Activated CD8-positive, alpha-beta T cell treated with anti-CD3 and anti-CD28 coated beads for 36 hours (primary cell): ENCODE measurements at regions of chr21 and their contacts with region 1.

Region 1: GRCh38 chr21:43884012-43884860 is 19.2 kb downstream of the AGPAT3 start:
- DNase-seq: peak; percentile 61
- ATAC-seq: peak; percentile 79
- H3K4me3 Mint-ChIP-seq: no peak overlapping the region
- H3K27ac Mint-ChIP-seq: peak overlapping the region; percentile 57
- H3K4me1 Mint-ChIP-seq: peaks cover 63% of the 10 kb centered on the region
- H3K27me3 Mint-ChIP-seq: no peaks in the 10 kb centered on the region
- CTCF ChIP-seq: no peak

Region 2: DNA sequence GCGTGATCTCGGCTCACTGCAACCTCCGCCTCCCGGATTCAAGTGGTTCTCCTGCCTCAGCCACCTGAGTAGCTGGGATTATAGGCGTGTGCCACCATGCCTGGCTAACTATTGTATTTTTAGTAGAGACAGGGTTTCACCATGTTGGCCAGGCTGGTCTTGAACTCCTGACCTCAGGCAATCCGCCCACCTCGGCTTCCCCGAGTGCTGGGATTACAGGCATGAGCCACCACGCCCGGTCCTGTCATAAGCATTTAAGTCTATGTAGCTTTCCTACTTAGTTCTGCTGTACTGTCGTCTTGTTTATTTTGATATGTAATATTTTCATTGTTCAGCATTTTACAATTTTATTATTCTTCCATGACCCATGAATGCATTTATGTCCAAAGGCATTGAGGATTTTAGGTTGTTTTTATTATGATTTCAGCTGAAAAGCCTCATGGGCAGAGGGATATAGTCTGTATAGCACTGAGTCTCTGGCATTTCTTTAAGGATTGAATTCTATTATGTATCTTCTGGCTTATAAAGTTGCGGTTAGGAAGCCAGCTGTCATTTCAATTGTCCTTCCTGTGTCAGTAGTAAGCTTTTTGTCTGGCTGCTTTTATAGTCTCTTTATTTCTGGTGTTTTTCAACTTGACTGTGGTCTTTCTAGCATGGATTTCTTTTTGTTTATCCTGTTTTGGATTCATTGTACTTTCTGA is 10.0 kb before region 1 on chr21:
- CTCF ChIA-PET with region 1: interaction called, 4 read pairs
- POLR2A ChIA-PET with region 1: interaction called, 11 read pairs
- intact Hi-C with region 1: no loop called
- DNase-seq: no peak
- ATAC-seq: no peak
- H3K4me3 Mint-ChIP-seq: no peak overlapping the region
- H3K27ac Mint-ChIP-seq: peak overlapping the region; percentile 52
- H3K4me1 Mint-ChIP-seq: peaks cover 57% of the 10 kb centered on the region
- H3K27me3 Mint-ChIP-seq: no peaks in the 10 kb centered on the region
- CTCF ChIP-seq: no peak

Region 3: GRCh38 chr21:43916691-43917514 is 32.7 kb after region 1 on chr21:
- CTCF ChIA-PET with region 1: no interaction called
- POLR2A ChIA-PET with region 1: interaction called, 4 read pairs
- intact Hi-C with region 1: loop called (anchors 5 kb)
- DNase-seq: peak; percentile 82
- ATAC-seq: peak; percentile 76
- H3K4me3 Mint-ChIP-seq: peak overlapping the region; percentile 79
- H3K27ac Mint-ChIP-seq: peak overlapping the region; percentile 82
- H3K4me1 Mint-ChIP-seq: peaks cover 51% of the 10 kb centered on the region
- H3K27me3 Mint-ChIP-seq: peaks cover 2% of the 10 kb centered on the region
- CTCF ChIP-seq: no peak